HEK293T (cell line): ENCODE measurements at regions of chr7 and their contacts with region 1.

Region 1: DNA sequence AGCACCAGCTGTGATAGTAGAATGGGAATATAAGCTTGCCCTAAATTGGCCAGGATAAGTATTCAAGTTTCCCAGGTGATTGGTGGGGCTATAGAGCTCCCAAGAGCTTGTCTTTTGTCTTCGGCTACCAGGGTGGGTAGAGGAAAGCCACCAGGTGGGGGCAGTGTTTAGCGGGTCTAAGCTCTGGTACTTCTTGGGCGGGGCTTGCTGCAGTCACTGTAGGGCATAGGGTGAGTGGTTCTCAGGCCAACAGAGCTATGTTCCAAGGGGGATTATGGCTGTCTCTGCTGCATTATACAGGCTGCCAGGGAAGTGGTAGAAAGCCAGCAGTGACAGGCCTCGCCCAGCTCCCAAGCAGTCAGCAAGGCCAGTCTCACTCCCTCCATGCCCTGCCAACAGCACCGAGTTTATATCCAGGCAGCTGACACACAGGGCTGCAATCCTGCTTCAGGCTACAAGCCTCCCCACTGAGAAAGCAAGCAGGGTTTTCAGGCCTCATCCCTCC is 110.7 kb downstream of the ZNF467 start:
- DNase-seq: peak; percentile 86

Region 2: GRCh38 chr7:149595541-149595940 is 67.1 kb before region 1 on chr7:
- CTCF ChIA-PET with region 1: no interaction called
- POLR2A ChIA-PET with region 1: no interaction called
- DNase-seq: no peak

Region 3: GRCh38 chr7:149644778-149645177 is 17.9 kb before region 1 on chr7:
- CTCF ChIA-PET with region 1: interaction called, 10 read pairs
- POLR2A ChIA-PET with region 1: interaction called, 5 read pairs
- DNase-seq: no peak

Region 4: DNA sequence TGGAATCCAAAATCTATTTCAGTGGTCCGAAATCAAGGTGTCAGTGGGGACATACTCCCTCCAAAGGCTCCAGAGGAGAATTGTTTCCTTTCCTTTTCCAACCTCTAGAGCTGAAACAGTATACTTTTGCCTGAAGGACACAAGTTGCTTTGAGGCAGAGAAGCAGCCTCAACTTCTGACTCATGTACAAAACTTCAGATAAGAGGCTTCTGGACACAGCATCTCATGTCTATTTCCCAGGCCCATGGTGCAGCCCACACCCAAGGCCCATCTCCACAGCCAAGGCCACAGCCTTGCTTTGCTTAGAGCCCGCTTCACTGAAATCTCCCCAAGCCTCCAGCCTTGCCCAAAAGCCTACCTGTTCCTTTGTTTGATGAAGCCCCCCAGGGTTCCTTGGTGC is 41.9 kb after region 1 on chr7:
- CTCF ChIA-PET with region 1: interaction called, 24 read pairs
- POLR2A ChIA-PET with region 1: interaction called, 4 read pairs
- DNase-seq: no peak

Region 5: DNA sequence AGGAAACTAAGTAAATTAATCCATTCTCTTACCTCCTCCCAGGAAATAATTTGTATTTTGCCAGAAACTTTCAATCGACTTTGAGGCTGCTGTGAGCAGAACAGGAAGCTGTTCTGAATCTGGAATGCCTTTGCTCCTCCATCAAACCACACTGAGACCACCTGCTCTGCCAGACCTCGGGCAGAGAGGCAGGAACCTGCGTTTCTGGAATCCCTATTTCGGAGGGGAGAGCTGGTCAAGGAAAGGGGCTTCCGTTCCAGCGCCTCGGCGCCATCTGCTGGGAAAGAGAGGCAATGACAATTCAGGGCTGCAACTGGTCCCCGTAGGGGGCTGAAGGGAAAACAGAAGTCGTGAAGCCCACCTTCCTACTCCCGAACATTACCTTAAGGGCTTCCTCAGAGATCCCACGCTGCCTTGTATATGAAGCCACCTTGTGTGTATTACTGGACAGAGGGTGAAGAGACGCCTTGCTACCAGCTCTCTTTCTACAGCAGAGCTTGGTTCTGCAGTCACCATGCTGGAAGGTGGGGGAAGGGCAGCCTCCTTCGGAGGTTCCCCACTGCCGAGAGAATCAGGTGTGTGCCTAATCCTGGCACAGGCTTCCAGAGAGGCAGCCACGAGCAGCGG is 79.5 kb after region 1 on chr7:
- CTCF ChIA-PET with region 1: interaction called, 70 read pairs
- POLR2A ChIA-PET with region 1: interaction called, 12 read pairs
- DNase-seq: peak; percentile 96

Region 6: GRCh38 chr7:149790146-149790548 is 127.5 kb after region 1 on chr7:
- CTCF ChIA-PET with region 1: interaction called, 15 read pairs
- POLR2A ChIA-PET with region 1: no interaction called
- DNase-seq: peak; percentile 43

Region 7: DNA sequence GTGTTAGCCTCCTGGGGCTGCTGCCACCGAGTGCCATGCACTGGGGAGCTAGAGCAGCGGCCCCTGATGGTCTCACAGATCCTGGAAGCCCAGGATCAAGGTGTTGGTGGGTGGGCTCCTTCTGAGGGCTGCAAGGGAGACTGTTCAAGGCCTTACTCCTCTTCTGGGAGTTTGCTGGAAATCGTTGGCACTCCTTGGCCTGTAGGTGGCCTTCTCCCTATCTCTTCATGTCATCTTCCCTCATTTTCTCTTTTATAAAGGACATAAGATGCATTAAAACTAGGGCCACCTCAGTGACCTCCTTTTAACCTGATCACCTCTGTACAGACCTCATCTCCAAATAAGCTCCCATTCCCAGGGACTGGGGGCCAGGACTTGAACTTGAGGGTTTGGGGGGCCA is 148.6 kb after region 1 on chr7:
- CTCF ChIA-PET with region 1: interaction called, 18 read pairs
- POLR2A ChIA-PET with region 1: no interaction called
- DNase-seq: no peak